Ovary (tissue), 10 donors: ENCODE measurements at regions of chr9 and their contacts with region 1.

Region 1: GRCh38 chr9:86948074-86948929 is 996 bp upstream of the GAS1 start:
- DNase-seq: peak; percentile 71 to 85 (median 82)
- H3K4me3 ChIP-seq: peak overlapping the region; percentile 65
- H3K27ac ChIP-seq: peak overlapping the region; percentile 10 to 95
- H3K4me1 ChIP-seq: peaks cover 2% of the 10 kb centered on the region
- H3K27me3 ChIP-seq: no peaks in the 10 kb centered on the region
- CTCF ChIP-seq: peak; percentile 75 to 94 (median 89)
- EP300 ChIP-seq: no peak
- POLR2A ChIP-seq: no peak

Region 2: GRCh38 chr9:86486891-86487837 is 461.1 kb before region 1 on chr9:
- intact Hi-C with region 1: loop called in 1 of 4 experiments (anchors 5 kb)
- DNase-seq: no peak
- H3K4me3 ChIP-seq: no peak overlapping the region
- H3K27ac ChIP-seq: no peak overlapping the region
- H3K4me1 ChIP-seq: no peaks in the 10 kb centered on the region
- H3K27me3 ChIP-seq: no peaks in the 10 kb centered on the region
- CTCF ChIP-seq: peak; percentile 65 to 74 (median 71)
- EP300 ChIP-seq: no peak
- POLR2A ChIP-seq: no peak

Region 3: GRCh38 chr9:86772635-86772993 is 175.7 kb before region 1 on chr9:
- intact Hi-C with region 1: no loop called
- DNase-seq: no peak
- H3K4me3 ChIP-seq: no peak overlapping the region
- H3K27ac ChIP-seq: no peak overlapping the region
- H3K4me1 ChIP-seq: no peaks in the 10 kb centered on the region
- H3K27me3 ChIP-seq: no peaks in the 10 kb centered on the region
- CTCF ChIP-seq: no peak
- EP300 ChIP-seq: no peak
- POLR2A ChIP-seq: no peak

Region 4: GRCh38 chr9:86795823-86796553 is 152.3 kb before region 1 on chr9:
- intact Hi-C with region 1: loop called in 1 of 4 experiments (anchors 5 kb)
- DNase-seq: peak; percentile 62 to 75 (median 69)
- H3K4me3 ChIP-seq: no peak overlapping the region
- H3K27ac ChIP-seq: peak overlapping the region in 1 of 2 donors; percentile 69
- H3K4me1 ChIP-seq: peaks cover 15% of the 10 kb centered on the region
- H3K27me3 ChIP-seq: no peaks in the 10 kb centered on the region
- CTCF ChIP-seq: peak in 2 of 3 donors; percentile 44 to 48
- EP300 ChIP-seq: no peak
- POLR2A ChIP-seq: peak; percentile 15

Region 5: GRCh38 chr9:87063871-87064270 is 115.6 kb after region 1 on chr9:
- intact Hi-C with region 1: loop called in 2 of 4 experiments (anchors 10 kb)
- DNase-seq: peak in 2 of 5 donors; percentile 28 to 37
- H3K4me3 ChIP-seq: no peak overlapping the region
- H3K27ac ChIP-seq: peak overlapping the region in 1 of 2 donors; percentile 33
- H3K4me1 ChIP-seq: peaks cover 7% of the 10 kb centered on the region
- H3K27me3 ChIP-seq: no peaks in the 10 kb centered on the region
- CTCF ChIP-seq: no peak
- EP300 ChIP-seq: no peak
- POLR2A ChIP-seq: no peak

Region 6: GRCh38 chr9:87080512-87081264 is 132.4 kb after region 1 on chr9:
- intact Hi-C with region 1: loop called in 1 of 4 experiments (anchors 5 kb)
- DNase-seq: no peak
- H3K4me3 ChIP-seq: no peak overlapping the region
- H3K27ac ChIP-seq: peak overlapping the region in 1 of 2 donors; percentile 25
- H3K4me1 ChIP-seq: no peaks in the 10 kb centered on the region
- H3K27me3 ChIP-seq: no peaks in the 10 kb centered on the region
- CTCF ChIP-seq: no peak
- EP300 ChIP-seq: no peak
- POLR2A ChIP-seq: no peak

Region 7: GRCh38 chr9:87290241-87291052 is 342.1 kb after region 1 on chr9:
- intact Hi-C with region 1: no loop called
- DNase-seq: no peak
- H3K4me3 ChIP-seq: no peak overlapping the region
- H3K27ac ChIP-seq: no peak overlapping the region
- H3K4me1 ChIP-seq: peaks cover 2% of the 10 kb centered on the region
- H3K27me3 ChIP-seq: no peaks in the 10 kb centered on the region
- CTCF ChIP-seq: no peak
- EP300 ChIP-seq: no peak
- POLR2A ChIP-seq: no peak